ENCODE measurements at regions of chr15 and their contacts with region 1.

Region 1: GRCh38 chr15:56732921-56733797 is at the start of gene ZNF280D:
- DNase-seq: peak; percentile 77
- H3K4me3 Mint-ChIP-seq: peak within 1 kb of the TSS; percentile 95
- H3K27ac Mint-ChIP-seq: peak within 1 kb of the TSS; percentile 99
- H3K4me1 Mint-ChIP-seq: peaks cover 47% of the 10 kb centered on the region
- H3K27me3 Mint-ChIP-seq: peaks cover 3% of the 10 kb centered on the region
- total RNA-seq, gene ZNF280D: 29.9 and 30.5 TPM in 2 replicates

Region 2: GRCh38 chr15:56425976-56426375 is 307.2 kb before region 1 on chr15:
- intact Hi-C with region 1: no loop called
- DNase-seq: no peak
- H3K4me3 Mint-ChIP-seq: no peak overlapping the region
- H3K27ac Mint-ChIP-seq: no peak overlapping the region
- H3K4me1 Mint-ChIP-seq: no peaks in the 10 kb centered on the region
- H3K27me3 Mint-ChIP-seq: peaks cover 2% of the 10 kb centered on the region

Region 3: GRCh38 chr15:56715220-56715619 is 17.9 kb before region 1 on chr15:
- intact Hi-C with region 1: no loop called
- DNase-seq: no peak
- H3K4me3 Mint-ChIP-seq: no peak overlapping the region
- H3K27ac Mint-ChIP-seq: no peak overlapping the region
- H3K4me1 Mint-ChIP-seq: peaks cover 22% of the 10 kb centered on the region
- H3K27me3 Mint-ChIP-seq: no peaks in the 10 kb centered on the region

Region 4: DNA sequence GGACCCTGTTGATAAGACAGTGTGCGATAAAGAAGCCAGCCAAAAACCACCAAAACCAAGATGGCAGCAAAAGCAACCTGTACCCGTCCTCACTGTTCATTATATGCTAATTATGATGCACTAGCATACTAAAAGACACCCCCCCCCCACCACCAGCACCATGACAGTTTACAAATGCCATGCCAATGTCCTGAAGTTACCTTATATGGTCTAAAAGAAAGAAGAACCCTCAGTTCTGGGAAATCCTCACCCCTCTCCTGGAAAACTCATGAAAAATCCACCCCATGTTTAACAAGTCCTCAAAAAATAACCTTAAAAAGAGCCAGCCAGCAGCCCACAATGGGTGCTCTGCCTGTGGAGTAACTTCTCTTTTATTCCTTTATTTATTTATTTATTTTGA is 48.5 kb after region 1 on chr15:
- intact Hi-C with region 1: no loop called
- DNase-seq: no peak
- H3K4me3 Mint-ChIP-seq: no peak overlapping the region
- H3K27ac Mint-ChIP-seq: no peak overlapping the region
- H3K4me1 Mint-ChIP-seq: peaks cover 19% of the 10 kb centered on the region
- H3K27me3 Mint-ChIP-seq: no peaks in the 10 kb centered on the region

Region 5: GRCh38 chr15:56886932-56887781 is 154.0 kb after region 1 on chr15:
- intact Hi-C with region 1: loop called (anchors 2 kb)
- DNase-seq: peak; percentile 76
- H3K4me3 Mint-ChIP-seq: peak overlapping the region; percentile 85
- H3K27ac Mint-ChIP-seq: peak overlapping the region; percentile 85
- H3K4me1 Mint-ChIP-seq: peaks cover 27% of the 10 kb centered on the region
- H3K27me3 Mint-ChIP-seq: peaks cover 4% of the 10 kb centered on the region